ENCODE measurements at regions of chr5 and their contacts with region 1.

Region 1: DNA sequence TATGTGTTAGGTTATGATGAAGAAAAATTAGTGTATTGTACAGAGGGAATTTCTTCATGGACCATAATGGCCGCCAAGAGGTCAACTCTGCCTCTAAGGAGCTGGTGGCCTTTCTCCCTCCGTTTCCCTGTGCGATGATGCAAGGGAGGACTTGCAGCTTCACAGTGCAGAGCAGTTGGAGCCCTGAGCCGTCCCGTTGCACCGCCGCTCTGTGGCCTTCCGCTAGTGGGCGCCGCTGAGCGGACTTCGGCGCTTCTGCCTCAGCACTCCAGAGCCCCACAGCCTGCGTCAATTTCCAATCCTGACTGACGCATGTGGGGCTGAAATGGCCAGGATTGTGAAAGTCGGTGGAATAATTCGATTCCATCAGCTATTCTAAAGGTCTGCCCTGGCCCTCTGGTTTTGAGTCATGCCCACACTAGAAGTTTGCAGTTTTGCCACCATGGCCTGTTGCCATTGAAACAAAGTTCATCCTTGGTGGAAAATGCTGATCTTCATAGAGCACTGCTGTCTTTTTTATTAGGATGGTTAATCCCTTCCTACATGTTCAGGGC is 22.7 kb upstream of the LECT2 start:
- DNase-seq: peak in 1 of 2 experiments; percentile 77
- H3K4me3 ChIP-seq: no peak overlapping the region
- H3K27ac ChIP-seq: no peak overlapping the region
- H3K4me1 ChIP-seq: no peaks in the 10 kb centered on the region
- H3K27me3 ChIP-seq: no peaks in the 10 kb centered on the region
- CTCF ChIP-seq: no peak

Region 2: DNA sequence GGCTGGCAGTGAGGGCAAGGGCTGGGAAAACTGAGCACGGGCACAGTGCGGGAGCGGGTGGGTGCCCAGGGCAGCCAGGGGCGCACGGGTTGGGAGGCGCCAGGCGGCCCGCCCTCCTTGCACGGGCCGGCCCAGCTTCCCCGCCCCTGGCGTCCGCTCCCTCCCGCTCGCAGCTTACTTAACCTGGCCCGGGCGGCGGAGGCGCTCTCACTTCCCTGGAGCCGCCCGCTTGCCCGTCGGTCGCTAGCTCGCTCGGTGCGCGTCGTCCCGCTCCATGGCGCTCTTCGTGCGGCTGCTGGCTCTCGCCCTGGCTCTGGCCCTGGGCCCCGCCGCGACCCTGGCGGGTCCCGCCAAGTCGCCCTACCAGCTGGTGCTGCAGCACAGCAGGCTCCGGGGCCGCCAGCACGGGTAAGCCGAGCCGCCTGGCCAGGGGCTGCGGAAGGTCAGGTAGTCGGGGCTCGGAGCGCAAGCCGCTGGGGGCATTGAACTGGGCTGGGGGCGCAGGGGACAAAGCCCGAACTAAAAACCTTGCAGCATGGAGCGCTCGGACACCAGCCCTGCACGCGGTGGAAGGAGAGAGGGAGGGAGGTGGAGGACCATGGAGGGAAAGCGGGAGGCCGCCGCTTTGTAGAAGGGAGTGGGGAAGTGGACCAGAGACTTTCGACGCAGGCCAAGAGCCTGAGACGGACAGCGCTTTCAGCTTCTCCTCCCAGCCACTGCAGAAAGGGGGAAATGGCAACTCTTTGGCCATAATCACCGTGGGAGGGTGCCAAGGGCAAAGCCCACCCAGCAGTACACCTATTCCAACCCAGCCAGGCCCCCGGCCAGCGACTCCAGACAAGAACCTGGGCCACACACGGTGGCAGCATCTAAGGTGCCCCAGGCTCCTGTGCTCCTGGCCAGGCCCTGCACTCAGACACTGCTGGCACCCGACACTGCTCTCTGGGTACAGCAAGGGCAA is 51.6 kb after region 1 on chr5 and contains the start of gene TGFBI:
- CTCF ChIA-PET with region 1: interaction called, 9 read pairs
- POLR2A ChIA-PET with region 1: no interaction called
- intact Hi-C with region 1: loop called (anchors 2 kb)
- DNase-seq: peak; percentile 55 to 75
- H3K4me3 ChIP-seq: peak within 1 kb of the TSS; percentile 94
- H3K27ac ChIP-seq: peak within 1 kb of the TSS; percentile 38; the same call in 1 of the 2 replicates
- H3K4me1 ChIP-seq: peaks cover 54% of the 10 kb centered on the region
- H3K27me3 ChIP-seq: no peaks in the 10 kb centered on the region
- CTCF ChIP-seq: no peak
- total RNA-seq, gene TGFBI: 430 and 437 TPM in 2 replicates

Region 3: DNA sequence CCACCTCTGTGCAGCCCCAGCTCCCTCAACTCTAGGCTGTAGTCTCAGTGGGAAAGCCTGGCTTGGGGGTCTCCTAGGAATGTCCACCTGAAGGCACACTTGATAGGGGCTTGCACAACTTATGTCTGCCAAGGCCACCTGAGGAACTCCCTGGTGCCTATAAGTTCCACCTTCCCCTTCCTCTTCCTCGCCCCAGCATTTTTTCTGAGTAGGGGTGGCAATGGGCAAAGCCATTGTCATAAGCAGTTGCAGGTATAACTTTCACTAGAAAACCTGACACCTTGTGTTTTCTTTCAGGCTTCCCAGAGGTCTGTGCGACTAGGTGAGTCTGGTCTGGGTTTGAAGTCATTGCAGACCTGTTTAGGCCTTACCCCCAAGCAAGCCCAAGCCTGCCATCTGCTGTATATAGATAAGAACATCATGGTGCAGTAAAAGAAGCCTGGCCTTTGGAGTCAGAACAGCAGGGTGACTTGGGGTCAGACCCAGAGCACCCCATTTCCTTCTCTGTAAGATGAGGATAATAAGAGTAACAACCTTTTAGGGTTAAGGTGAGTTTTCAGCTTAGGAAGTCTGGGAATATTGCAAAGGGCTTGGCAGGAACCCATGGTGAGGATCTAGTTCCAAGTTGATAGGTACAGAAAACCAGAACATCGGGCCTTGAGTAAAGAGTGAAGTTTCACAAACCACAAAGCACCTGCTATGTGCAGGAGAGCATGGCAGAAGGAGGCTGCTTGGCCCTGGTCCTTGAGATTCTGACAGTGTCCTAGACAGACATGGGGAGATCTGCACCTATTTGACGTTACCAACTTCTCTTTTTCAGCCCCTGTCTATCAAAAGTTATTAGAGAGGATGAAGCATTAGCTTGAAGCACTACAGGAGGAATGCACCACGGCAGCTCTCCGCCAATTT is 85.2 kb after region 1 on chr5:
- CTCF ChIA-PET with region 1: interaction called, 3 read pairs
- POLR2A ChIA-PET with region 1: no interaction called
- intact Hi-C with region 1: loop called (anchors 1 kb)
- DNase-seq: peak; percentile 26 to 51
- H3K4me3 ChIP-seq: no peak overlapping the region
- H3K27ac ChIP-seq: no peak overlapping the region
- H3K4me1 ChIP-seq: peaks cover 13% of the 10 kb centered on the region
- H3K27me3 ChIP-seq: no peaks in the 10 kb centered on the region
- CTCF ChIP-seq: peak; percentile 74